Naive thymus-derived CD4-positive, alpha-beta T cell (primary cell): ENCODE measurements at regions of chr19 and their contacts with region 1.

Region 1: DNA sequence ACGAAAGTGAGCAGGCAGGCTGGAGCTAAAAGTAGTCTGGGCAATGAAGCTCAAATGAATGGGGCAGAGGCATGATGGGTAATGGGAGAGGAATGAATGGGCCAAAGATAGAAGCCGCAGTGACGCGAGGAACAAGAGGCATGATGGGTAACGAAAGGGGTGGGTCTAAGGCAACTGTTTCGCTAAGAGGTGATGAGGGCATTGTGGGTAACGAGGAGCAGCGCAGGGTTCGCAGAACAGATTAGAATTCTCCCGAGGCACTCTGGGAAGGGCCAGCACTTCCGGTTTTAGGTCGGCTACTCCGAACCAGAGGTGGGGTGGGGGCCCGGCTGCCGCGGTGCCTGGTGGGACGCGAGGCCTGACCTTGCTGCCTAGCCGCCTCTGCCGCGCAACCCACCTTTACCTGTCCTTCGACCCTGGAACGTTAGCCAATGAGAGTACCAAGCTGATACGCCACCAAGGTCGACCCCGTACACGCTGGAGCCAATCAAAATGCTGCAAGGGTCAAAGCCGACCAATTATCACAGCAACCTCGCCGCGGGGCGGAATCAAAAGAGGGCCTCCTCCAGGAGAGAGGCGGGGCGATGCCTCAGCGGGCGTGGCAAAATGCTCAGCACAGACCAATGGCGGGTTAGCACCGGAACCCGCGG is 563 bp upstream of the TOMM40 start:
- DNase-seq: peak; percentile 97 to 100 (median 100)
- ATAC-seq: peak; percentile 86
- H3K4me3 ChIP-seq: peak overlapping the region; percentile 69
- H3K4me3 Mint-ChIP-seq: peak overlapping the region; percentile 83 to 93 (median 89)
- H3K27ac ChIP-seq: peak overlapping the region; percentile 84
- H3K27ac Mint-ChIP-seq: peak overlapping the region; percentile 90 to 96 (median 94)
- H3K4me1 ChIP-seq: peaks cover 10 to 20% of the 10 kb centered on the region in 2 donors
- H3K4me1 Mint-ChIP-seq: peaks cover 18 to 44% (median 35%) of the 10 kb centered on the region in 7 donors
- H3K27me3 ChIP-seq: no peaks in the 10 kb centered on the region
- H3K27me3 Mint-ChIP-seq: no peaks in the 10 kb centered on the region

Region 2: GRCh38 chr19:44702551-44703176 is 187.8 kb before region 1 on chr19:
- CTCF ChIA-PET with region 1: no interaction called
- POLR2A ChIA-PET with region 1: no interaction called
- intact Hi-C with region 1: no loop called
- DNase-seq: no peak
- ATAC-seq: no peak
- H3K4me3 ChIP-seq: no peak overlapping the region
- H3K4me3 Mint-ChIP-seq: no peak overlapping the region
- H3K27ac ChIP-seq: no peak overlapping the region
- H3K27ac Mint-ChIP-seq: no peak overlapping the region
- H3K4me1 ChIP-seq: no peaks in the 10 kb centered on the region
- H3K4me1 Mint-ChIP-seq: no peaks in the 10 kb centered on the region
- H3K27me3 ChIP-seq: no peaks in the 10 kb centered on the region
- H3K27me3 Mint-ChIP-seq: peaks cover 0 to 7% (median 0%) of the 10 kb centered on the region in 5 donors

Region 3: DNA sequence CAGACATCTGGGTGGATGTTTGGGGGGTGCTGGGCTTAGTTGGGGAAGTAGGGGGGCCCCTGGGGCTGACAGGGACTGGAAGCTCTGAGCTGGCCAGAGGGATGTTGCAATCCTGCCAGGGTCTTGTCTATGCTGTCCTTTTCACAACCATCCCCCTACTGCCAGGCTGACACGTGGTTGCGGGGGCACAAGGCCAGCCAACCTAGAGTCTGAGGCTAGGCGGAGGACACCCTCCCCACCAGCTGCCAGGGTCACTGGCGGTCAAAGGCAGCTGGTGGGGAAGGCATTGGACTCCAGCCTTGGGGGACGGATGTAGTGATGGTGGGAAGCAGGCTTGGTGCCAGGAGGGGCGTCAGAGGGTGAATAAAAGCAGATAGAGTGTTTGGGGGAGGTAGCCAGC is 22.4 kb after region 1 on chr19:
- CTCF ChIA-PET with region 1: no interaction called
- POLR2A ChIA-PET with region 1: interaction called, 3 read pairs
- intact Hi-C with region 1: loop called (anchors 1 kb)
- DNase-seq: no peak
- ATAC-seq: no peak
- H3K4me3 ChIP-seq: no peak overlapping the region
- H3K4me3 Mint-ChIP-seq: peak overlapping the region in 2 of 10 donors; percentile 9 to 51
- H3K27ac ChIP-seq: no peak overlapping the region
- H3K27ac Mint-ChIP-seq: no peak overlapping the region
- H3K4me1 ChIP-seq: no peaks in the 10 kb centered on the region
- H3K4me1 Mint-ChIP-seq: peaks cover 4 to 19% (median 7%) of the 10 kb centered on the region in 7 donors
- H3K27me3 ChIP-seq: no peaks in the 10 kb centered on the region
- H3K27me3 Mint-ChIP-seq: peaks cover 26 to 36% (median 32%) of the 10 kb centered on the region in 5 donors

Region 4: GRCh38 chr19:44925114-44925891 is 34.8 kb after region 1 on chr19:
- CTCF ChIA-PET with region 1: no interaction called
- POLR2A ChIA-PET with region 1: no interaction called
- intact Hi-C with region 1: no loop called
- DNase-seq: no peak
- ATAC-seq: peak; percentile 16
- H3K4me3 ChIP-seq: no peak overlapping the region
- H3K4me3 Mint-ChIP-seq: no peak overlapping the region
- H3K27ac ChIP-seq: no peak overlapping the region
- H3K27ac Mint-ChIP-seq: no peak overlapping the region
- H3K4me1 ChIP-seq: peaks cover 0 to 6% of the 10 kb centered on the region in 2 donors
- H3K4me1 Mint-ChIP-seq: peaks cover 0 to 15% (median 6%) of the 10 kb centered on the region in 7 donors
- H3K27me3 ChIP-seq: no peaks in the 10 kb centered on the region
- H3K27me3 Mint-ChIP-seq: peaks cover 7 to 26% (median 20%) of the 10 kb centered on the region in 5 donors